ENCODE measurements at regions of chr12 and their contacts with region 1.

Region 1: GRCh38 chr12:92551853-92552397 is 150.9 kb upstream of the PLEKHG7 start:
- DNase-seq: no peak
- H3K4me3 ChIP-seq: no peak overlapping the region
- H3K27ac ChIP-seq: no peak overlapping the region
- H3K4me1 ChIP-seq: peaks cover 0 to 16% of the 10 kb centered on the region in 2 donors
- H3K27me3 ChIP-seq: no peaks in the 10 kb centered on the region
- CTCF ChIP-seq: no peak
- POLR2A ChIP-seq: no peak

Region 2: GRCh38 chr12:92424338-92424737 is 127.6 kb before region 1 on chr12:
- intact Hi-C with region 1: loop called (anchors 5 kb)
- DNase-seq: no peak
- H3K4me3 ChIP-seq: no peak overlapping the region
- H3K27ac ChIP-seq: no peak overlapping the region
- H3K4me1 ChIP-seq: peaks cover 7 to 22% of the 10 kb centered on the region in 2 donors
- H3K27me3 ChIP-seq: no peaks in the 10 kb centered on the region
- CTCF ChIP-seq: no peak
- POLR2A ChIP-seq: no peak

Region 3: GRCh38 chr12:92654929-92655328 is 103.0 kb after region 1 on chr12:
- intact Hi-C with region 1: no loop called
- DNase-seq: peak; percentile 57 to 70
- H3K4me3 ChIP-seq: no peak overlapping the region
- H3K27ac ChIP-seq: peak overlapping the region; percentile 52 to 62 (median 54)
- H3K4me1 ChIP-seq: peaks cover 19 to 20% of the 10 kb centered on the region in 2 donors
- H3K27me3 ChIP-seq: no peaks in the 10 kb centered on the region
- CTCF ChIP-seq: no peak
- POLR2A ChIP-seq: no peak

Measured in thyroid gland (tissue), 4 donors.